ENCODE measurements at regions of chr13 and their contacts with region 1.

Region 1: GRCh38 chr13:25319771-25320170 is 18.3 kb downstream of the NUP58 start:
- DNase-seq: no peak
- H3K4me3 ChIP-seq: no peak overlapping the region
- H3K27ac ChIP-seq: no peak overlapping the region
- H3K4me1 ChIP-seq: peaks cover 4% of the 10 kb centered on the region
- H3K27me3 ChIP-seq: no peaks in the 10 kb centered on the region
- CTCF ChIP-seq: no peak
- POLR2A ChIP-seq: no peak

Region 2: DNA sequence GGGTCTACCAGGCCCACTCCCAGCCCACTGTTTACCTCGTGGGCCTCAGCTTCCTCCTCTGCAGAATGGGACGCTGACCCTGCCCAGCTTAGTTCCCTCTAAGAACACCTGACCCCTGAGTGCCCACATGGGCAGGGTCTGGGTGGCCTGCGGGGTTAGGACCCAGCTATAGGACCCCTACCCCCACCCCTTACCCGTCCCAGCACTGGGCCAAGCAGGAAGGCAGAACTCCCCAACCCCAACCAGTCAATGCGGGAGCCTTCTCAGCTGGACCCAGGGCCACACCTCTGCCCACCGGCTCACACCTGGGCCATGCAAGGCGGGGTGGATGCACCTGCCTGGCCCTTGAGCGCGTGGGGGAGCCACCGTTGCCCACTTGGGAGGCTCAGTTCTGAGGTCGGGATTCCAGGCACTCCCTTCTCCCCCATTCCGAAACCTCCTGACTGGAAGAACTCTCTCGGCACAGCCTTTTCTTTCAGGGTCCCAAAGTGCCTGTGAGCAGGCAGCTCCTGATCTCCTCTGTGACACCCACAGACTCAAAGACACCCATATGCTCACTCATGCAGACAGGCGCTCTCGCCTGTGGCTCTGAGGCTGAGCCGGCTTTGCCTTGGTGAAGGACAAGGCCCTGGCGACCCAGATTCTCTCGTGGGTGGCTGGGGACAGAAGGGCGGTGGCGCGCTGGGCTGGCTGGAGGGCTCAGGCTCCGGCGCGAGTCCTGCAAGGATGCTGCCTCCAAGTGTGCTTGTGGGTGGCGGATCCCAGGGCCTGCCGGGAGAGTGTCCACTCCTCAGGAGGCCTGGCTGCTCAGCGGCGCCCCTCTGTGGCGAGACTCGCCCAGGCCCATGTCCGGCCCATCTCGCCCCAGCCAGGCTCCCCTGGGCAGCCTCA is 779.3 kb before region 1 on chr13:
- CTCF ChIA-PET with region 1: no interaction called
- POLR2A ChIA-PET with region 1: no interaction called
- dilution Hi-C with region 1: no loop called
- intact Hi-C with region 1: no loop called
- DNase-seq: peak; percentile 13
- H3K4me3 ChIP-seq: no peak overlapping the region
- H3K27ac ChIP-seq: no peak overlapping the region
- H3K4me1 ChIP-seq: peaks cover 3% of the 10 kb centered on the region
- H3K27me3 ChIP-seq: peaks cover 9 to 35% of the 10 kb centered on the region in 2 experiments
- CTCF ChIP-seq: peak; percentile 48 to 66
- POLR2A ChIP-seq: no peak

Region 3: GRCh38 chr13:25301347-25302047 is 18.3 kb before region 1 on chr13 and contains the start of gene NUP58:
- CTCF ChIA-PET with region 1: no interaction called
- POLR2A ChIA-PET with region 1: no interaction called
- dilution Hi-C with region 1: no loop called
- intact Hi-C with region 1: loop called (anchors 2 kb)
- DNase-seq: peak; percentile 96
- H3K4me3 ChIP-seq: peak within 1 kb of the TSS; percentile 94 to 99 (median 99)
- H3K27ac ChIP-seq: peak within 1 kb of the TSS; percentile 79
- H3K4me1 ChIP-seq: peaks cover 16% of the 10 kb centered on the region
- H3K27me3 ChIP-seq: peaks cover 8 to 22% of the 10 kb centered on the region in 2 experiments
- CTCF ChIP-seq: no peak
- POLR2A ChIP-seq: peak; percentile 70
- total RNA-seq, gene NUP58: 49.6 and 59.2 TPM in 2 replicates

Region 4: GRCh38 chr13:26011996-26012821 is 692.4 kb after region 1 on chr13:
- CTCF ChIA-PET with region 1: no interaction called
- POLR2A ChIA-PET with region 1: no interaction called
- dilution Hi-C with region 1: no loop called
- intact Hi-C with region 1: loop called (anchors 10 kb)
- DNase-seq: no peak
- H3K4me3 ChIP-seq: peak overlapping the region in 1 of 3 experiments; percentile 19
- H3K27ac ChIP-seq: no peak overlapping the region
- H3K4me1 ChIP-seq: peaks cover 46% of the 10 kb centered on the region
- H3K27me3 ChIP-seq: no peaks in the 10 kb centered on the region
- CTCF ChIP-seq: no peak
- POLR2A ChIP-seq: no peak